CD8-positive, alpha-beta T cell (primary cell): ENCODE measurements at regions of chr7 and their contacts with region 1.

Region 1: DNA sequence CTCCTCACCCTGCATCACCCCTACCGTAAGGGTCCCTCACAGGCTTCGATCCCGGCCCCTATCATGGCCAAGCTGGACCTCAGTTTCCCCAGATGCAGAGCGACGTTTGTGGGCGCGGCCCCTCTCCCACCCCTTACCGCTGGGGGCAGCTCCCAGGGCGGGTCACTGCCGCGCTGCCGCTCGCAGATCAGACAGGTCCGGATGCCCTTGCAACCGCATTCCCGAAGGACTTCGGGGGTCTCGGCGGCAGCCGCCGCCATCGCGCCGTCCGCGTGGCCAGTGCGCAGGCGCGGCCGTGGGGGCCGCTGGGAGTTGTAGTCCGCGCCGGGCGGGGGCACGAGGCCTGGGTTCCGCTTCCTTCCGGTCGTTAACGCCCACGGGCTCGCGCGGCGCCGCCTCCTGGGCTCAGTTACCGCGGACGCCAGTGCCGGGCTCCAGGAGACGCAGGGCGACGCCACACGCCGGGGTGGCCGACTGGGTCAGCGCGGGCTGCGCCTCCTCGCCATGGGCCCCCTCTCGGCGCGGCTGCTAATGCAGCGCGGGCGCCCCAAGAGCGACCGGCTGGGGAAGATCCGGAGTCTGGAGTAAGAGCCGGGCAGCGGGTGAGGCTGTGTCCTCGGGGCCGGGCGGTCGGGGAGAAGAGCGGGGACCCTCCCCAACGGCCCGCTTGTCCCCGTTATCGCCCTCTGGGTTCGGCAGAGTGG is at the starts of genes ALKBH4 and LRWD1:
- DNase-seq: peak; percentile 86 to 97 (median 93)
- ATAC-seq: peak; percentile 96
- H3K4me3 ChIP-seq: peak within 1 kb of the TSS; percentile 99 to 100
- H3K4me3 Mint-ChIP-seq: peak within 1 kb of the TSS; percentile 91
- H3K27ac ChIP-seq: peak within 1 kb of the TSS; percentile 71 to 72
- H3K27ac Mint-ChIP-seq: peak within 1 kb of the TSS; percentile 62
- H3K4me1 ChIP-seq: peaks cover 21% of the 10 kb centered on the region
- H3K4me1 Mint-ChIP-seq: peaks cover 40% of the 10 kb centered on the region
- H3K27me3 ChIP-seq: no peaks in the 10 kb centered on the region
- H3K27me3 Mint-ChIP-seq: no peaks in the 10 kb centered on the region
- CTCF ChIP-seq: no peak
- total RNA-seq, gene ALKBH4: 4.4 to 5.2 TPM
- total RNA-seq, gene LRWD1: 14.9 to 19.1 TPM

Region 2: GRCh38 chr7:101941481-101942383 is 523.0 kb before region 1 on chr7:
- CTCF ChIA-PET with region 1: no interaction called
- POLR2A ChIA-PET with region 1: no interaction called
- intact Hi-C with region 1: no loop called
- DNase-seq: no peak
- ATAC-seq: no peak
- H3K4me3 ChIP-seq: no peak overlapping the region
- H3K4me3 Mint-ChIP-seq: no peak overlapping the region
- H3K27ac ChIP-seq: no peak overlapping the region
- H3K27ac Mint-ChIP-seq: no peak overlapping the region
- H3K4me1 ChIP-seq: no peaks in the 10 kb centered on the region
- H3K4me1 Mint-ChIP-seq: peaks cover 7% of the 10 kb centered on the region
- H3K27me3 ChIP-seq: no peaks in the 10 kb centered on the region
- H3K27me3 Mint-ChIP-seq: no peaks in the 10 kb centered on the region
- CTCF ChIP-seq: no peak

Region 3: DNA sequence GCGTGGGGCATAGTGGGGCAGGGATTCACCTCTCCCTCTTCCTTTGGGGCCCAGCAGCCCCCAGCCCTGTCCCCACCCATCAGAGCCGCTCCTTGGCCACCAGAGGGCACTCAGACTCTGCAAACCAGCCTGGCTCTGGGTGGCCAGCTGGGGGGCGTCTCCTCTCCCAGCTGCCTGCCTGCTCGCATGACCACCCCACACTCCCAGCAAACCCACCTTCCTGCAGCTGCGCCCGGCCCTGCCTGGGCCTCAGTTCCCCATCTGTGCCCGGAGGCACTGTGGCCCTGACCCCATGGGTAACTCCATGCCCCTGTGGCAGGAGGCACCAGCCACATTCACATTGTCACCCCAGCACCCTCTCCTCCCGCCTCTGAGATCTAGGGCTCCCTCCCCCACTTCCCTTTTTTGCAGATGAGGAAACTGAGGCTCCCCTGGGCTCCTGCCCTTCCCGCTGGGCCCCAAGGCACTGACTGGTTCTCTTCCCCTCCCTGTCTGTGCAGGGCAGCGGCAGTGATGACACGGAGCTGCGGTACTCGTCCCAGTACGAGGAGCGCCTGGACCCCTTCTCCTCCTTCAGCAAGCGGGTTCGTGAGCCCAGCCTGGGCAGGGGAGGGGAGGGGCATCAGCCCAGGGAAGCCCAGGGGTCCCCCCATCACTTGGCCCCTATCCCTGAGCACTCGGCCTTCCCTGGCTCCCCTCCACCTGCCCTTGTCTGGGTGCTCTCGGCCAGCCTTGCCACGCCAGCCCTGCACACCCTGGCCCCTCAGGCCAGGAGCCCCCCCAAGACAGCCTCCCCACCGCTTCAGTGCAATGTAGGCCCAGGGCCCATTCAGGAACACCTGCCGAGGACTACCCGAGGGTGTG is 185.0 kb before region 1 on chr7:
- CTCF ChIA-PET with region 1: no interaction called
- POLR2A ChIA-PET with region 1: no interaction called
- intact Hi-C with region 1: loop called in 1 of 2 experiments (anchors 10 kb)
- DNase-seq: peak; percentile 23 to 78 (median 61)
- ATAC-seq: peak; percentile 89
- H3K4me3 ChIP-seq: no peak overlapping the region
- H3K4me3 Mint-ChIP-seq: no peak overlapping the region
- H3K27ac ChIP-seq: no peak overlapping the region
- H3K27ac Mint-ChIP-seq: no peak overlapping the region
- H3K4me1 ChIP-seq: peaks cover 4% of the 10 kb centered on the region
- H3K4me1 Mint-ChIP-seq: peaks cover 7% of the 10 kb centered on the region
- H3K27me3 ChIP-seq: no peaks in the 10 kb centered on the region
- H3K27me3 Mint-ChIP-seq: no peaks in the 10 kb centered on the region
- CTCF ChIP-seq: peak; percentile 62

Region 4: GRCh38 chr7:102396027-102397019 is 68.4 kb before region 1 on chr7 and contains the start of gene PRKRIP1:
- CTCF ChIA-PET with region 1: interaction called, 4 read pairs
- POLR2A ChIA-PET with region 1: interaction called, 9 read pairs
- intact Hi-C with region 1: loop called (anchors 1 kb)
- DNase-seq: peak; percentile 68 to 97 (median 84)
- ATAC-seq: peak; percentile 96
- H3K4me3 ChIP-seq: peak within 1 kb of the TSS; percentile 84 to 92
- H3K4me3 Mint-ChIP-seq: peak within 1 kb of the TSS; percentile 96
- H3K27ac ChIP-seq: peak within 1 kb of the TSS; percentile 82 to 84
- H3K27ac Mint-ChIP-seq: peak within 1 kb of the TSS; percentile 97
- H3K4me1 ChIP-seq: peaks cover 13% of the 10 kb centered on the region
- H3K4me1 Mint-ChIP-seq: peaks cover 26% of the 10 kb centered on the region
- H3K27me3 ChIP-seq: no peaks in the 10 kb centered on the region
- H3K27me3 Mint-ChIP-seq: no peaks in the 10 kb centered on the region
- CTCF ChIP-seq: no peak
- total RNA-seq, gene PRKRIP1: 51.1 to 57.2 TPM

Region 5: DNA sequence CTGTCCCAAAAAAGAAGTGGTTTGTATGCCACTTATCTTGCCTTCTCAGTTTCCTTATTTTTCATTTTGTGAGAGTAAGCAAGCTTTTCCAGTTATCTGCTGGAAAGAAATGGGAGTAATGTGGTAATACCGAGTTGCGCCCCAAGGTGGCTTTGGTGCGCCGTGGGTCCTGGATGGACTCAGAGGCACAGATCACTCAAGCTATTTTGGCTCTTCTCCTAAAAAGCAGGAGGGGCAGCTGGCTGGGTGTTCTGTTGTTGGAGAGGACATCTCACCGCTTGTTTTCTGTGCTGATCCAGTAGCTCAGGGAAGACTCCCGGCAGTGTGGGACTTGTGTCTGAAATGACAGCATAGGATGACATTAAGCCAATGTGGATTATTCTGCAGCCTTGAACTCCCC is 52.2 kb before region 1 on chr7:
- CTCF ChIA-PET with region 1: interaction called, 33 read pairs
- POLR2A ChIA-PET with region 1: interaction called, 5 read pairs
- intact Hi-C with region 1: loop called in 1 of 2 experiments (anchors 1 kb)
- DNase-seq: peak in 7 of 9 experiments; percentile 38 to 71 (median 62)
- ATAC-seq: peak; percentile 32
- H3K4me3 ChIP-seq: no peak overlapping the region
- H3K4me3 Mint-ChIP-seq: no peak overlapping the region
- H3K27ac ChIP-seq: no peak overlapping the region
- H3K27ac Mint-ChIP-seq: no peak overlapping the region
- H3K4me1 ChIP-seq: peaks cover 37% of the 10 kb centered on the region
- H3K4me1 Mint-ChIP-seq: peaks cover 40% of the 10 kb centered on the region
- H3K27me3 ChIP-seq: no peaks in the 10 kb centered on the region
- H3K27me3 Mint-ChIP-seq: no peaks in the 10 kb centered on the region
- CTCF ChIP-seq: peak; percentile 66

Region 6: DNA sequence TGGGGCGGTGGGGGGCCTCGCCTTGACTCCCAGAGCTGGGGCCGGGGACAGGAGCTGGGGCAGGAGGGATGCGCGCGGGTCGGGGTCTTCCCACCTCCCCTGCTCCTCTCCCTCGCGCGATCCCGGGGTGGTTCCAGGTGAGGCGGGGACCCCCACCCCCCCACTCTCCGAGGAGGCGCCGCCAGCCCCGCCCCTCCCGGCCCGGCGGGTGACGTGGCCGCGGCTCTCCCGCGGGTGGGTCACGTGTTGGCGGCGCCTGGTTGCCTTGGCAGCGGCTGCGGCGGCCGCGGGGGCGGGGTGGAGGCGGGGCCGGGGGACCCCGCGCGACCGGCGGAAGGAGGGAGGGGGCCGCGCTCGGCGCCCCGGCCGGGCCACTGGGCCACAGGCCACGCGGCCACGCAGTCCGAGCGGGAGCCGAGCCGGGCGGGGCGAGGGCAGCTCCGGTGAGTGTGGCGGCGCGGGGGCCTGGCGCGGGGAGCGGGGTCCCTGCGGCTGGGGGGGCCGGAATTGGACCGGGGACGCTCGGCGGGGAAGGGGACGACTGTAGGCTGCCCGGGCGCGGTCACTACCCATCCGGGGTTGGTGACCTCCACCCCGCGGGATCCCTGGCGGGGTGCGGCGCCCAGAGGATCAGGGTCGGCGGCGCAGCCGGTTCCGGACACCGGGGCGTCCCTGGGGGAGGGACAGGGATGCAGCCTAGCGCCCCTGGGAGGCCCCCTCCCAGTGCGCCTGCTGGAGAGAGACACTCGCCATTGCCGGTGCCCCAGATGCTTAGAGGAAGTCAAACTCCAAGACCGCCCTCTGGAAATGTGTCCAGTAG is 31.3 kb before region 1 on chr7 and contains the start of gene ORAI2:
- CTCF ChIA-PET with region 1: interaction called, 4 read pairs
- POLR2A ChIA-PET with region 1: interaction called, 5 read pairs
- intact Hi-C with region 1: loop called (anchors 1 to 2 kb)
- DNase-seq: peak; percentile 76 to 92 (median 87)
- ATAC-seq: peak; percentile 55
- H3K4me3 ChIP-seq: peak within 1 kb of the TSS; percentile 78 to 82
- H3K4me3 Mint-ChIP-seq: peak within 1 kb of the TSS; percentile 82
- H3K27ac ChIP-seq: peak within 1 kb of the TSS; percentile 71 to 94
- H3K27ac Mint-ChIP-seq: peak within 1 kb of the TSS; percentile 100
- H3K4me1 ChIP-seq: peaks cover 57% of the 10 kb centered on the region
- H3K4me1 Mint-ChIP-seq: peaks cover 54% of the 10 kb centered on the region
- H3K27me3 ChIP-seq: no peaks in the 10 kb centered on the region
- H3K27me3 Mint-ChIP-seq: no peaks in the 10 kb centered on the region
- CTCF ChIP-seq: no peak
- total RNA-seq, gene ORAI2: 20.4 to 25.5 TPM